Activated CD4-positive, alpha-beta T cell treated with anti-CD3 and anti-CD28 coated beads, Interleukin-2, amount 10 ng/mL, durations not matched to agents 24 days and 14 days (primary cell): ENCODE measurements at regions of chr1 and their contacts with region 1.

Region 1: GRCh38 chr1:28199328-28200233 is 23.1 kb upstream of the PTAFR start:
- DNase-seq: peak; percentile 93
- H3K4me3 Mint-ChIP-seq: peak overlapping the region; percentile 73
- H3K27ac Mint-ChIP-seq: peak overlapping the region; percentile 90
- H3K4me1 Mint-ChIP-seq: peaks cover 42% of the 10 kb centered on the region
- H3K27me3 Mint-ChIP-seq: no peaks in the 10 kb centered on the region

Region 2: DNA sequence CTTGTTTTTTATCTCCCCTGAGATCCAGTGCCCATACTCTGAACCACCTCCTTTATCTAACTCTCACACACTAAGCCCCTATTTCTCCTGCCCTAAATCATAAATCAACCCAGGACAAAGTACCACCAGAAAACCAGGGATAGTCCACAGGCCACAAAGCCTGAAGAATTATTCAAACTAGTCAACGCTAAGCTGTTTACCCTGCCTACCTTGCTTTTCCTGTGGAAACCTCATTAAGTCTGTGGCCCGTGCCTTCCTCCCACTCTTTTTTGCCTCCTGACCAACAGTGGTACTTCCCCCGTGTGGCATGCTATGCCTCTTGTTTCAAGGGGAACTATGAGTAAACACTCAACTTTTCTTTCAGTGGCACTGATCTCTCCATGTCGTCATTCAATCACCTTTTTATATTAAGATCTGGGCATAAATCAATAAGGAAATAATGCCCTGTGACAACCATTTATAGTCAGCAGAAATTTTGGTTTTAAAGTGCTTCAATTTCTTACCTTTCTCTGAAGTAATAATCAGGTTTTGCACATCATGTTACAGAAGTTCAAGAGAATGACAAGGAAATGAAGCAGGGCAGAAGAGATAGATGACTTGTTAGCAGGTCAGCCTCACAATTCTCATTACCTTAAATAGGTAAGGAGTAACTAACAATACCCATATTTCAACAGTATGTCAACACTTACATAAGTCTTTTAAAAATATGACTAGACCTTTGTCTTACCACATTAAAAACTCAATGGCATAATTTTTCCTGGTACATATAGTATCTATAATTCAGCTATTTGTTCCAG is 143.3 kb before region 1 on chr1:
- intact Hi-C with region 1: loop called (anchors 1 kb)
- DNase-seq: peak; percentile 83
- H3K4me3 Mint-ChIP-seq: peak overlapping the region; percentile 70
- H3K27ac Mint-ChIP-seq: peak overlapping the region; percentile 91
- H3K4me1 Mint-ChIP-seq: peaks cover 34% of the 10 kb centered on the region
- H3K27me3 Mint-ChIP-seq: no peaks in the 10 kb centered on the region

Region 3: DNA sequence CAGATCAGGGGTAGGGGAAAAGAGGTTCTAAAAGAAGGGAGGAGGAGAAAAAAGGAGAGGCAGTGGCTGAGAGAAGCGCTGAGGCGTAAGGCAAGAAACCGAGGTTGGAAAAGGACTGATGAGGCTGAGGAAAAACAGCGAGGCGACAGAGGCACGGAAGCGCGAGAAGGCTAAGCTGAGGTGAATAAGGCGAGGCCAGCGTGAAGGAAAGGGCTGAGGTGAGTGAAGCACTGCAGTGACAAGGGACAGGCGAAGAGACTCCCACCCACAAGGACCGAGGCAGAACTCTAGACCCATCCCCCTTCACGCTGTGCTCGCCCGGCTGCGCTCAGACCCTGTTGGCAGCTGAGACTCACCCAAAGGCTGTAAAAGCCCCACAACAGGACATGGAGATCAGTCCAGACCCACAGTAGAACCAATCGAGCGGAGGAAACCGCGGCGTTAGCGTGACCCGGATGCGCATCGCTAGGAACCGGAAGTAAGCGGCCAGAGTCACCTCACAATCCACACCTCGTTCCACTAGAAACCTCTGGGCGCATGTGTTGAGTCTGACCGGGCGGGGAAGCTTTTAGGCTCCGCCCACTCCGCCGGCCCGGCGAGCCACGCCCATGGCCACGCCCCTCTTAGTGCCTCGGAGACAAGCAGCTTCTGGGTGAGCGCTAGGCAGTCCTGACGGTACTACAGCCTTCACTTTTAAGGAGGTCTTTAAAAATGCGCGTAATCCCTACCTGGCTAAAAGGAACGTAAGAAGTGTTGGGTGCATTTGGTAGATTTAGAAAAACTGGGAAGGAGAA is 111.2 kb before region 1 on chr1 and contains the start of gene EYA3:
- intact Hi-C with region 1: loop called (anchors 1 kb)
- DNase-seq: peak; percentile 100
- H3K4me3 Mint-ChIP-seq: peak within 1 kb of the TSS; percentile 98
- H3K27ac Mint-ChIP-seq: peak within 1 kb of the TSS; percentile 96
- H3K4me1 Mint-ChIP-seq: peaks cover 19% of the 10 kb centered on the region
- H3K27me3 Mint-ChIP-seq: peaks cover 5% of the 10 kb centered on the region
- total RNA-seq, gene EYA3: 32.9 and 34.7 TPM in 2 replicates

Region 4: GRCh38 chr1:28115267-28115666 is 84.3 kb before region 1 on chr1:
- intact Hi-C with region 1: loop called (anchors 1 kb)
- DNase-seq: peak; percentile 83
- H3K4me3 Mint-ChIP-seq: peak overlapping the region; percentile 40
- H3K27ac Mint-ChIP-seq: peak overlapping the region; percentile 49
- H3K4me1 Mint-ChIP-seq: peaks cover 14% of the 10 kb centered on the region
- H3K27me3 Mint-ChIP-seq: peaks cover 23% of the 10 kb centered on the region

Region 5: GRCh38 chr1:28144203-28145135 is 55.1 kb before region 1 on chr1:
- intact Hi-C with region 1: loop called (anchors 1 kb)
- DNase-seq: peak; percentile 70
- H3K4me3 Mint-ChIP-seq: no peak overlapping the region
- H3K27ac Mint-ChIP-seq: no peak overlapping the region
- H3K4me1 Mint-ChIP-seq: peaks cover 9% of the 10 kb centered on the region
- H3K27me3 Mint-ChIP-seq: peaks cover 55% of the 10 kb centered on the region

Region 6: GRCh38 chr1:28172713-28173150 is 26.8 kb before region 1 on chr1:
- intact Hi-C with region 1: loop called (anchors 1 kb)
- DNase-seq: peak; percentile 85
- H3K4me3 Mint-ChIP-seq: peak overlapping the region; percentile 47
- H3K27ac Mint-ChIP-seq: peak overlapping the region; percentile 15
- H3K4me1 Mint-ChIP-seq: peaks cover 48% of the 10 kb centered on the region
- H3K27me3 Mint-ChIP-seq: peaks cover 54% of the 10 kb centered on the region

Region 7: GRCh38 chr1:28235755-28236655 is 36.4 kb after region 1 on chr1 and contains the start of gene ATP5IF1:
- intact Hi-C with region 1: loop called (anchors 2 kb)
- DNase-seq: peak; percentile 98
- H3K4me3 Mint-ChIP-seq: no peak within 1 kb of the TSS
- H3K27ac Mint-ChIP-seq: no peak within 1 kb of the TSS
- H3K4me1 Mint-ChIP-seq: peaks cover 11% of the 10 kb centered on the region
- H3K27me3 Mint-ChIP-seq: no peaks in the 10 kb centered on the region
- total RNA-seq, gene ATP5IF1: 139 and 142 TPM in 2 replicates